Activated CD4-positive, alpha-beta memory T cell treated with anti-CD3 and anti-CD28 coated beads, Interleukin-2, amount 10 ng/mL, durations not matched to agents 7 days and 5 days (primary cell): ENCODE measurements at regions of chr21 and their contacts with region 1.

Region 1: DNA sequence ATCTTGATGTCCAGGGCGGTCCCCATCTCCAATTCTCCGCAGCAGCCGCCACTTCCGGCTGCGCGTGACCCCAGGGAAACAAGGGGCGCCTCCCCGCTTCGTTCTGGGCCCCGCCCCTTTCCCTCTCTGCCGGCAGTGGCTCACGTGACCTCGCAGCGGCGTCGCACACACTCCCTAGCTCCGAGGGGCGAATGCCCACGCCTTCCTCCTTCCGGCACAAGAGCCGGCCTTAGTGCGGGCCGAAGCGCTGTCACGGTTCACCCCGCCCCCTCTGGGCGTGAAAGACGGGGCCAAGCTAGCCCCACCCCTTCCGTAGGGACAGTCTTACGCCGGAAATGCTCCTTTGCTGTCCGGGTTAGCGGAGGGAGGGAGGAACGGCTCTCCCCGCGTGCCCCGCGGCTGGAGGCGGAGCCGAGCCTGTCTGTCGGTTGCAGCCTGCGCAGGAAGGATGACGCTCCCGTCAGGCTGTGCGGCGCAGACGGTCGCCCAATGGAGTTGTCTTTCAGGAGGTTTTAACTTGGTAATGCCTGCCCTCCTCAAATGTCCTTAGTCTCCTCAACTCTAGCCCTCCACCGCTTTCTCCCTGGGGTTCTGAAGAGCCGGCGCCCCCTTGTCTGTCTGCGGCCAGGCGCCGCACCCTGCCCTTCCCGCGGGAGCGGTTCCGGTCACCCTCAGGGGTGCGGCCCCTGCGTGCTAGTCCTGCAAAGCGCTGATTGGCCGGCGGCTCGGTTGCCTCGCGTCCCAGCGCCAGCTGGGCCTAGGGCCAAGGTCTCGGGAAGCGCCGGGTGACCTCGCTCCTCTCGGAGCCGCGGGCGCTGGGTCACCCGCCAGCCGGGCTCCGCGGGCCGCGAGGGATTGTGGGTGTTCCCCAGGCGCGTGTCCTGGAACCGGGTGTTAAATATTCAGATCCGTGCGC is at the start of gene VPS26C:
- DNase-seq: peak; percentile 99
- H3K4me3 Mint-ChIP-seq: peak within 1 kb of the TSS; percentile 95
- H3K27ac Mint-ChIP-seq: peak within 1 kb of the TSS; percentile 98
- H3K4me1 Mint-ChIP-seq: peaks cover 48% of the 10 kb centered on the region
- H3K27me3 Mint-ChIP-seq: no peaks in the 10 kb centered on the region
- total RNA-seq, gene VPS26C: 70.7 to 73.1 TPM

Region 2: DNA sequence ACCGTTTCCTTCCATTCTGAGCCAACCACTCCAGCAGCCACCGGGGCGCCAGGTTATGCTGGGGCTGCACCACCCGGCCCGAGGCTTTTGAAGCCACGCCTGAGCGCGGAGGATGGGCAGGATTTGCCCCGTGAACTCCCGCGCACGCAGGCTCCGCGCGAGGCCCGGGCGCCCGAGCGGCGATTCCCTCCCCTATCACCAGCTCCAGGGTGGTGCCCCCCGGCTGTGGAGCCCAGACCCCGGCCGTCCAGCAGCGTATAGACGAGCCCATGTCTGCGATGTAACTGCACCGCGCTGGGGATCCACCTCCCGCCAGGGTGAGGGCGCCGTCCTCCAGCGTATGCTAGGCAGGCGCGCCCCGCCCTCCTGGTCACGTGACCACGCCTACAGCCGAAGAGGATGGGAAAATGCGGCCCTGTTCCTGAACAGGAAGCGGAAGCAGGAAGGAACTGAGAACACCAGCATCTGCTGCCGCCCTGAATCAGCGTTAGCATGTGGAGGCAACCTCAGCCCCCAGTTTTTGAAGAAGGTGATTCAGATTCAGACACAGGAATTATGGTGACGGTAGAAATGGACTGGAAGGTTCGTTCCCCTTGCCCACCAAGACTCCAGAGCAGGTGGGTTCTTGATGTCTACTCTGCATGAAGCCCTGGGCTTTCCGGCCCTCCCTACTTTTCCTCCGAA is 46.4 kb before region 1 on chr21:
- CTCF ChIA-PET with region 1: interaction called, 9 read pairs
- POLR2A ChIA-PET with region 1: interaction called, 35 read pairs
- DNase-seq: peak; percentile 92
- H3K4me3 Mint-ChIP-seq: peak overlapping the region; percentile 84
- H3K27ac Mint-ChIP-seq: peak overlapping the region; percentile 88
- H3K4me1 Mint-ChIP-seq: peaks cover 56% of the 10 kb centered on the region
- H3K27me3 Mint-ChIP-seq: no peaks in the 10 kb centered on the region

Region 3: DNA sequence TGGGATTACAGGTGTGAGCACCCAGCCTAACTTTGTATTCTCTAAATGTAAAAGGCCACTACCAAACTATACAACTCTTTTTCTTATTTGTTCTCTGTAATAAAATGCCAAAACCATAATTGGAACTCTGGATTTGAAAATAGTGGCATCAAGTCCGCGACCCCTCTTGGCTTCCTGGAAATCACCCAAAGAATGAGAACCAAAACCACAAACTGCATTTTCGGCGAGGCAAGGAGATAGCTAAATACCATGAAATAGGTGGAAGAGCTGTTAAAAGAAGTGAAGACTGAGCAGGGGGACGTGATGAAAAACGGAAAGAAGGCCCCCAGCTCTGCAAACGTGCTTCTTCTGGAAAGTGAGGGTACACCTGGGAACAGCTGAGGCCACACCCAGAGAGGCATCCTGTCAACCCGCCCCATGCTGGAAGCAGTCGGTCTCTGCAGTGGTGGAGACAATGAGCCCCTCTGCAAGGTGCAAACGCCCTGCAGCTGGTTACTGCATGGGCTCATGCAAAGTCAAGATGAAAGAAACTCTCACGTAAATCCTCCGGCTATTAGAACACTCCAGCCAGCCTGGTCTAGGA is 22.9 kb before region 1 on chr21:
- CTCF ChIA-PET with region 1: interaction called, 10 read pairs
- POLR2A ChIA-PET with region 1: interaction called, 19 read pairs
- DNase-seq: no peak
- H3K4me3 Mint-ChIP-seq: peak overlapping the region; percentile 61
- H3K27ac Mint-ChIP-seq: peak overlapping the region; percentile 83
- H3K4me1 Mint-ChIP-seq: peaks cover 65% of the 10 kb centered on the region
- H3K27me3 Mint-ChIP-seq: no peaks in the 10 kb centered on the region

Region 4: DNA sequence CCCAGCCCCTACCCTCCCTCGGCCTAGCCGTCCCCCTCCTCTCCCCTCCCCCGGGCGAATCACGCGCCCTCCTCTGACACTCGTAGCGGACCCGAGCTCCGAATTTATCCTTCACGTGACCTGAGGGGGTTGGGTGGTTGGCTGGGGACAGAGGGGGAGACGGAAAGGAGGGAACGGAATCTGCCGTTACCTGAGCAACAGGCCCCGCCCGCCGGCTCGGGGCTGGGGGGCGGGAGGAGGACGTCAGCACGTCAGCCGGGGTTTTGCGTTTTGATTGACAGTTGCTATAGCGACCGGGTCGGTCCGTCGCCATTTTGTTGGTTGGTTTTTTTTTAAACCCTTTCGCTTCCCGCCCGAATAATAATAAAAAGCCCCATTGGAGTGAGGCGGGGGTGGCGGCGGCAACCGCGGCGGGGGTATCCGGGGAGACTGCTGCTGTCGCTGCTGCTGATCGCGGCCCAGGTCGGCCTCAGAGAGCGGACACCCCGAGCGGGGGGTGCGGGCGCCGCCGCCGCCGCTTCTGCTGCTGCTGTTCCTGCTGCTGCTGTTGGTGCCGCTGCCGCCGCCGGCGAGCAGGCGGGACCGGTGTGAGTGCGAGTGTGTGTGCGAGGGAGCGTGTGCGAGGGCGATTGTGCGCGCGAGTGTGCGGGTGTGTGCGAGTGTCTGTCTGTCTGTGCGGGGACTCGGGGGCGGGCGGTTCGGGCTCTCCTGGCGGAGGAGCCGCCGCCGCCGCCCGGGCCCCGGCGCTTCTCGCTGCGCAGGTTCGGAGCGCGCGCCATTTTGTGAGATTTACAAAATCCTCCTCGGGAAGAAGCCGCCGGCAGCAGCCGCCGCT is 99.2 kb after region 1 on chr21 and contains the start of gene DYRK1A:
- CTCF ChIA-PET with region 1: interaction called, 9 read pairs
- POLR2A ChIA-PET with region 1: interaction called, 61 read pairs
- DNase-seq: peak; percentile 98
- H3K4me3 Mint-ChIP-seq: peak within 1 kb of the TSS; percentile 96
- H3K27ac Mint-ChIP-seq: peak within 1 kb of the TSS; percentile 99
- H3K4me1 Mint-ChIP-seq: peaks cover 44% of the 10 kb centered on the region
- H3K27me3 Mint-ChIP-seq: no peaks in the 10 kb centered on the region
- total RNA-seq, gene DYRK1A: 73.6 to 74.1 TPM

Region 5: GRCh38 chr21:37374027-37374426 is 106.5 kb after region 1 on chr21:
- CTCF ChIA-PET with region 1: interaction called, 6 read pairs
- POLR2A ChIA-PET with region 1: interaction called, 61 read pairs
- DNase-seq: no peak
- H3K4me3 Mint-ChIP-seq: no peak overlapping the region
- H3K27ac Mint-ChIP-seq: peak overlapping the region; percentile 29
- H3K4me1 Mint-ChIP-seq: peaks cover 77% of the 10 kb centered on the region
- H3K27me3 Mint-ChIP-seq: no peaks in the 10 kb centered on the region

Region 6: DNA sequence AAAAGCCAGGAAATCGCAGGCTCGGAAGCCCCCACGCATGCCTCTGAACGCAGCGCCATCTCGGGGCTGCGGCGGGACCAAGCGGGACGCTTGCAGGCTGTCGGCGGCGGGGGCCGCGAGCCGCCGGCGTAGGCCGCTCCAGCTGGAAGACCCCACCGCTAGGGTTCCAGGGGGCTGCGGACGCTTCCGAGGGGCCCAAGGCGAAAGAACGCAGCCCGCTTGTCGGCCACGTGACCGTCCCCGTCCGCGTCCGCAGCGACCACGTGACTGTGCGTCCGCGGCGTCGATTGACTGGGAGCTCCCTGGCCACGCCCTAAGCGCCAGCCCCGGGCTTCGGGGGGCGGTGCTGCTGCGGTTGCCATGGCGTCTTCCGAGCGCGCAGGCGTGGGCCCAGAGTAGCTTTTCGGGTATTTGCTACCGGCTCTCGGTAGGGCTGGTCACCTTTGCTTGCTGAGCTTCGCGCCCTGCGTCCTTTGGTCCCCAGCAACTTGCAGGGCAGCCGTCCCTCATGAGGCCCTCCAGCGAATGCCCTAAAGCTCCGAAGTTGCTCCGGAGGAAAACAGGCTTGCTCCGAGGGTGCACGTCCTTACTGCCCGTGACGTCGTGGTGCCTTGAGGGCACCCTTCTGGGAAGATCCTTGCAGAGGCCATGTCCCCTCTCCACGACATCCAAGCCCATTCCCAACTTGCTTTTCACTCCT is 296.3 kb after region 1 on chr21:
- CTCF ChIA-PET with region 1: interaction called, 9 read pairs
- POLR2A ChIA-PET with region 1: interaction called, 19 read pairs
- DNase-seq: peak; percentile 92
- H3K4me3 Mint-ChIP-seq: peak overlapping the region; percentile 91
- H3K27ac Mint-ChIP-seq: peak overlapping the region; percentile 99
- H3K4me1 Mint-ChIP-seq: peaks cover 24% of the 10 kb centered on the region
- H3K27me3 Mint-ChIP-seq: peaks cover 2% of the 10 kb centered on the region